ENCODE measurements at regions of chr3 and their contacts with region 1.

Region 1: DNA sequence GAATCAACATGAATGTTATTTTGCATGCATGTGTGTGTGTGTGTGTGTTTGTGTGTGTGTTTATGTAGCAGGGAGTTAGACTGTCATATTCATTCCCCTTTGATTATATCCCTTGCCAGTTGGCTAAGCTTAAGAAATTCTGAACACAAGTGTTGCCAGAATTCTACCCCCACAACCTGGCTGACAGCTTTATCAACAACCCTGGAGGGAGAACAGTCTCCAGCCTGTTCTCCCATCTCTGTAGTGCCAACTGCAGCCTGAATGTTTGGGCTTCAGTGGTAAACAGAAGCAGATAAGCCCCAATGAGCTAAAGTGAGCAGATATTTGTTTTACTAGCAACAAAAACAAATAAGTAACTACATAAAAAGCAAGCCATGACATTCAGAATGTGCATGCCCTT is 162.6 kb upstream of the ABI3BP start:
- DNase-seq: no peak
- H3K4me3 ChIP-seq: no peak overlapping the region
- H3K27ac ChIP-seq: no peak overlapping the region
- H3K4me1 ChIP-seq: no peaks in the 10 kb centered on the region
- H3K27me3 ChIP-seq: no peaks in the 10 kb centered on the region
- CTCF ChIP-seq: no peak

Region 2: DNA sequence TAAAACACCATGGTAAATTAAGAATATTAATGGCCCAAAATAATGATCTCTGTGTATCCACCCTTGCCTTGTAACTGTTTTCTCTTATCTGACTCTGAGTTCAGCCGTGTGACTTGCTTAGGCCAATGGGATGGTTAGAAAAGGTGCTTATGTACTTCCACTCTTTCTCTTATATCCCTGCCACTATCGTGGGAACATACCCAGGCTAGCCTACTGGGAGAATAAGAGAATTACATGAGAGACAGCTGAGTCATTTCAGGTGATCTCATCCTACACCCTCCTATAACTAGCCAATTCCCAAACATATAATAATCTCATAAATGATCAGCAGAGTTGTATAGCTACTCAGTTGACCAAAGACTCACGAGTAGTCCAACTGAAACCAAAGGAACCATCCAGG is 64.3 kb before region 1 on chr3:
- CTCF ChIA-PET with region 1: no interaction called
- POLR2A ChIA-PET with region 1: no interaction called
- intact Hi-C with region 1: no loop called
- DNase-seq: peak in 1 of 2 experiments; percentile 52
- H3K4me3 ChIP-seq: no peak overlapping the region
- H3K27ac ChIP-seq: no peak overlapping the region
- H3K4me1 ChIP-seq: no peaks in the 10 kb centered on the region
- H3K27me3 ChIP-seq: no peaks in the 10 kb centered on the region
- CTCF ChIP-seq: no peak

Region 3: GRCh38 chr3:101170062-101170771 is 14.4 kb after region 1 on chr3:
- CTCF ChIA-PET with region 1: no interaction called
- POLR2A ChIA-PET with region 1: interaction called, 13 read pairs
- intact Hi-C with region 1: no loop called
- DNase-seq: no peak
- H3K4me3 ChIP-seq: no peak overlapping the region
- H3K27ac ChIP-seq: no peak overlapping the region
- H3K4me1 ChIP-seq: no peaks in the 10 kb centered on the region
- H3K27me3 ChIP-seq: no peaks in the 10 kb centered on the region
- CTCF ChIP-seq: no peak

Region 4: GRCh38 chr3:101381809-101382208 is 226.0 kb after region 1 on chr3:
- CTCF ChIA-PET with region 1: no interaction called
- POLR2A ChIA-PET with region 1: interaction called, 11 read pairs
- intact Hi-C with region 1: no loop called
- DNase-seq: peak in 1 of 2 experiments; percentile 46
- H3K4me3 ChIP-seq: no peak overlapping the region
- H3K27ac ChIP-seq: no peak overlapping the region
- H3K4me1 ChIP-seq: no peaks in the 10 kb centered on the region
- H3K27me3 ChIP-seq: no peaks in the 10 kb centered on the region
- CTCF ChIP-seq: peak; percentile 83

Measured in PC-9 (cell line).